ENCODE measurements at regions of chr22 and their contacts with region 1.

Region 1: GRCh38 chr22:50641696-50642607 is 14.0 kb upstream of the ARSA start:
- DNase-seq: no peak
- H3K4me3 ChIP-seq: no peak overlapping the region
- H3K27ac ChIP-seq: no peak overlapping the region
- H3K27me3 ChIP-seq: peaks cover 47% of the 10 kb centered on the region
- CTCF ChIP-seq: peak; percentile 54

Region 2: DNA sequence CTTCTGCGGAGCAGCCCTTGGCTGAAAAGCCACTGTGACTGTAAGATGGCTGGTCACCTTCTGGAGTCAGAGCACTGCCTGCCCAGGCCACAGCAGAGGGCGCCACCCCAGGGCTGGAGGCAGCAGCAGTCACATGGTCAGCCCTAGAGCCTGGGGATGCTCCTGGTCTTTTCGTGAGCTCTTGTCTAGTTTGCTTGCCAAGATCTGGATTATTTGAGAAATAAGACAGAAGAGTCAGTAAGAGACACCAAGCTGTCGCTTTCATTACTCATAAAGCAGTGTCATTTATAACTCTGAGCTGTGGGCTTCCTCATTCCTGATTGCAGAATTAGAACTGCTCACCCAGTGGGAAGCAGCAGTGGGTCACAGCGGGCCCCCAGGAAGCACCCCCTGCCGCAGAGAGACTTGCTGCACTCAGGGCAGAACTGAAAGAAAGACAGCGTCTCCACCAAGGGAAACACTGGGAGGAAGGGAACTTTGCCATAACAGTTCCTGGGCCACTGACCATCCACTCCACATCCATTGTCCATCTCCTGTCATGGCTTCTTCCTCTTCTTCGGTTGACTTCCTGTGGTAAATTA is 242.1 kb before region 1 on chr22:
- CTCF ChIA-PET with region 1: interaction called, 17 read pairs
- POLR2A ChIA-PET with region 1: no interaction called
- DNase-seq: no peak
- H3K4me3 ChIP-seq: no peak overlapping the region
- H3K27ac ChIP-seq: no peak overlapping the region
- H3K27me3 ChIP-seq: no peaks in the 10 kb centered on the region
- CTCF ChIP-seq: peak; percentile 28; the same call in 1 of the 2 replicates

Region 3: GRCh38 chr22:50620593-50621355 is 21.2 kb before region 1 on chr22:
- CTCF ChIA-PET with region 1: interaction called, 10 read pairs
- POLR2A ChIA-PET with region 1: no interaction called
- DNase-seq: no peak
- H3K4me3 ChIP-seq: no peak overlapping the region; the same call in none of the 2 replicates
- H3K27ac ChIP-seq: no peak overlapping the region
- H3K27me3 ChIP-seq: peaks cover 13% of the 10 kb centered on the region
- CTCF ChIP-seq: no peak; the same call in 1 of the 2 replicates

Region 4: GRCh38 chr22:50691521-50691920 is 49.6 kb after region 1 on chr22:
- CTCF ChIA-PET with region 1: interaction called, 10 read pairs
- POLR2A ChIA-PET with region 1: no interaction called
- DNase-seq: no peak
- H3K4me3 ChIP-seq: no peak overlapping the region
- H3K27ac ChIP-seq: no peak overlapping the region
- H3K27me3 ChIP-seq: peaks cover 23% of the 10 kb centered on the region
- CTCF ChIP-seq: peak; percentile 59

Measured in AG04450 (cell line).